ENCODE measurements at regions of chr3 and their contacts with region 1.

Region 1: DNA sequence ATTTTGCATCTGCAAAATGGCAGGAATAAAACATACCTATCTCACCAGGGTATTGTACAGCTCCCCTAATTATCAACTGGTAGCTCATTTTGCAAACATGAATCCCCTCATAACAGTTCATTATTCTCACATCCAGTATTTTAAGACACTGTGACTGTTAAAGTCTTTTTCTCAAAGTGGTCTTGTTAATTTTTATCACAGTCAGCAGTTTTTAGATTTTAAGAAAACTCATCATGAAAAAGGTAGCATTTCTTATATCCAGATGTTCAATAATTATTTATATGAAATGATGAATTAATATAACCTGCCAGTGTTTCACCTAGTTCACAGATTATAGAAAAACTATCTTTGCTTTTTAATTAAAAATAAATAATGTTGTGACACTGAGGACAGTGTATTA is 354.9 kb upstream of the ARL6 start:
- DNase-seq: no peak
- H3K4me3 ChIP-seq: no peak overlapping the region
- H3K4me3 Mint-ChIP-seq: no peak overlapping the region
- H3K27ac Mint-ChIP-seq: no peak overlapping the region
- H3K4me1 ChIP-seq: no peaks in the 10 kb centered on the region
- H3K4me1 Mint-ChIP-seq: no peaks in the 10 kb centered on the region
- H3K27me3 ChIP-seq: no peaks in the 10 kb centered on the region
- H3K27me3 Mint-ChIP-seq: peaks cover 8% of the 10 kb centered on the region
- CTCF ChIP-seq: no peak

Region 2: GRCh38 chr3:97291901-97292300 is 117.7 kb before region 1 on chr3:
- CTCF ChIA-PET with region 1: no interaction called
- POLR2A ChIA-PET with region 1: no interaction called
- intact Hi-C with region 1: loop called (anchors 10 kb)
- DNase-seq: no peak
- H3K4me3 ChIP-seq: no peak overlapping the region
- H3K4me3 Mint-ChIP-seq: no peak overlapping the region
- H3K27ac Mint-ChIP-seq: no peak overlapping the region
- H3K4me1 ChIP-seq: no peaks in the 10 kb centered on the region
- H3K4me1 Mint-ChIP-seq: no peaks in the 10 kb centered on the region
- H3K27me3 ChIP-seq: no peaks in the 10 kb centered on the region
- H3K27me3 Mint-ChIP-seq: no peaks in the 10 kb centered on the region
- CTCF ChIP-seq: no peak

Measured in Caco-2 (cell line).